ENCODE measurements at regions of chr18 and their contacts with region 1.

Region 1: DNA sequence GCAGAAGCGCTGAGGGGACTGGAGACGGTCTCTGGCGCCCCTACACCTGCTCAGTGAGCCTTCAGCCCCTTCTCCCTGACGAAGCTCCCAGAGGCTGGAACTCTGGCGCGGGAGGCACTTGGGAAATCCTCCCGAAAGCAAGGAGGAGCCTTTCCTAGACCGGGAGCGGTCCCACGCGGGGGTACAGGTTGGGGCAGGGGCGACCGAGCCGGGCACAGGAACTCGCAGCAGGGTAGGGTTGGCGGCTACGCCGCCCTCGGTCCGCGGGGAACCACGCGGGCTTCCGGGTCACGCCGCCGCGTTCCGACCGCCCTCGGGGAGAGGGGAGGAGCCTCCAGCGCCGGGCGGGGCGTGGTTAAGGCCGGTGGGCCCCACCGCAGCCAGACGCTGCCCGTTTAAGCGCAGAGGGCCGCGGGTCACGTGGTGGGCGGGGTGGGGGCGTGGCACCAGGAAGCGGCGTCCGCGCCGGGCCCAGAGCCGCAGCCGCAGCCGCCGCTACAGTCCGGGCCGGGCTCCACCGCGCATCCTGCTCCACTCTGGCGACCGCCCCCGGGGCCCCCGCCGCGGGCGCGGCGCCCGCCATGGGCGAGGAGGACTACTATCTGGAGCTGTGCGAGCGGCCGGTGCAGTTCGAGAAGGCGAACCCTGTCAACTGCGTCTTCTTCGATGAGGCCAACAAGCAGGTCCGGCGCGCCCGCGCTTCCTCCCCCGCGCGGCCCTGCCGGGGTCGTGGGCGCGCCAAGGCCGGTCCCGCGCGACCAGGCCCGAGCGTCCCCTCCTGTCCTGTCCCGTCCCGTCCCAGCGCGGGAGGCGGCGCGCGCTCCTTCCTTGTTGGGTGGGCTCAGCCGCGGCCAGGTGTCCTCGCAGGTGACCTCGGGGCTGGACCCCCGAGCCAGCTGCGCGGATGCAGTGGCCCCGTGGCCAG is at the start of gene RMC1:
- DNase-seq: peak; percentile 89 to 93
- H3K4me3 ChIP-seq: peak within 1 kb of the TSS; percentile 74
- H3K4me3 Mint-ChIP-seq: peak within 1 kb of the TSS; percentile 86
- H3K27ac Mint-ChIP-seq: peak within 1 kb of the TSS; percentile 90
- H3K4me1 ChIP-seq: no peaks in the 10 kb centered on the region
- H3K4me1 Mint-ChIP-seq: no peaks in the 10 kb centered on the region
- H3K27me3 ChIP-seq: no peaks in the 10 kb centered on the region
- H3K27me3 Mint-ChIP-seq: no peaks in the 10 kb centered on the region
- CTCF ChIP-seq: peak in 1 of 2 experiments; percentile 26
- total RNA-seq, gene RMC1: 12.1 and 12.9 TPM in 2 replicates

Region 2: GRCh38 chr18:23032030-23032582 is 471.2 kb before region 1 on chr18:
- CTCF ChIA-PET with region 1: no interaction called
- POLR2A ChIA-PET with region 1: no interaction called
- intact Hi-C with region 1: loop called (anchors 10 kb)
- DNase-seq: no peak
- H3K4me3 ChIP-seq: no peak overlapping the region
- H3K4me3 Mint-ChIP-seq: no peak overlapping the region
- H3K27ac Mint-ChIP-seq: no peak overlapping the region
- H3K4me1 ChIP-seq: peaks cover 3% of the 10 kb centered on the region; the same call in 1 of the 2 replicates
- H3K4me1 Mint-ChIP-seq: no peaks in the 10 kb centered on the region
- H3K27me3 ChIP-seq: no peaks in the 10 kb centered on the region
- H3K27me3 Mint-ChIP-seq: no peaks in the 10 kb centered on the region
- CTCF ChIP-seq: no peak

Region 3: DNA sequence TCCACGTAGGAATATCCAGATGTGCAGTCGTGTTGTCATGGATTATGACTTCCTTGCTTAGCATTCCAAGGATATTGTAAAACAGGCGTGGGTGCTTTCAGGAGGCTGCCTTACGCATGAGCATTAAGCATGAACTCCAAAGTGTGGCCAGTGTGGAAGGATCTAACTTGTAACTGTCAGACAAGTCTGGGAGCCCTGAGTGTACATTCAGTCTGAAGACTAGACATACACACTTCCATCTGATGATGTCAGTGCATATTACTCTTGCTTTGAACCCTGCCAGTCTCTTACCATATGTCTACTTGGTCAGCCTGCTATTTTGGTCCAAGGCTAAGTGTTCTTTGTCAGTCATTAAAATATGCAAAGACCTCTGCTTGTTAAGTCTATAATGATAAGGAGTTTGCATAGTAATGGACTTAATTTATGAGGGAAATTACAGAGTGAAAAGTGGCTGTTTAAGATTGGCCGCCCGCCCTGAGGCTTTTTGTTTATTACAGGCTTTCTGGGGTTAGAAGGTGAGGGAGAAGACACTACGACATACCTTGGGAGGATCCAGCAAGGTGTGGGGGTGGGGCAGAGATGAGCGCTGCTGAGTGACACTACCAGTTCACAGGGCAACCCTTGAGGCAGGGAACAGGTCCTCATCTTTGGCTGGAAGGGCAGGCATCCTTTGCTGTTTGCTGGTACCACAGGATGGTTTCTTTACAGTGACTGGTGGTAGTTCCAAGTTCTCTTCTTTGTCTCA is 319.7 kb before region 1 on chr18:
- CTCF ChIA-PET with region 1: no interaction called
- POLR2A ChIA-PET with region 1: no interaction called
- intact Hi-C with region 1: no loop called
- DNase-seq: no peak
- H3K4me3 ChIP-seq: no peak overlapping the region
- H3K4me3 Mint-ChIP-seq: no peak overlapping the region
- H3K27ac Mint-ChIP-seq: peak overlapping the region; percentile 6
- H3K4me1 ChIP-seq: peaks cover 5% of the 10 kb centered on the region; the same call in 1 of the 2 replicates
- H3K4me1 Mint-ChIP-seq: peaks cover 15% of the 10 kb centered on the region
- H3K27me3 ChIP-seq: no peaks in the 10 kb centered on the region
- H3K27me3 Mint-ChIP-seq: no peaks in the 10 kb centered on the region
- CTCF ChIP-seq: no peak

Measured in Caco-2 (cell line).